Activated naive CD4-positive, alpha-beta T cell treated with anti-CD3 and anti-CD28 coated beads, Interleukin-2, amount 10 ng/mL, durations not matched to agents 7 days and 5 days (primary cell): ENCODE measurements at regions of chr11 and their contacts with region 1.

Region 1: DNA sequence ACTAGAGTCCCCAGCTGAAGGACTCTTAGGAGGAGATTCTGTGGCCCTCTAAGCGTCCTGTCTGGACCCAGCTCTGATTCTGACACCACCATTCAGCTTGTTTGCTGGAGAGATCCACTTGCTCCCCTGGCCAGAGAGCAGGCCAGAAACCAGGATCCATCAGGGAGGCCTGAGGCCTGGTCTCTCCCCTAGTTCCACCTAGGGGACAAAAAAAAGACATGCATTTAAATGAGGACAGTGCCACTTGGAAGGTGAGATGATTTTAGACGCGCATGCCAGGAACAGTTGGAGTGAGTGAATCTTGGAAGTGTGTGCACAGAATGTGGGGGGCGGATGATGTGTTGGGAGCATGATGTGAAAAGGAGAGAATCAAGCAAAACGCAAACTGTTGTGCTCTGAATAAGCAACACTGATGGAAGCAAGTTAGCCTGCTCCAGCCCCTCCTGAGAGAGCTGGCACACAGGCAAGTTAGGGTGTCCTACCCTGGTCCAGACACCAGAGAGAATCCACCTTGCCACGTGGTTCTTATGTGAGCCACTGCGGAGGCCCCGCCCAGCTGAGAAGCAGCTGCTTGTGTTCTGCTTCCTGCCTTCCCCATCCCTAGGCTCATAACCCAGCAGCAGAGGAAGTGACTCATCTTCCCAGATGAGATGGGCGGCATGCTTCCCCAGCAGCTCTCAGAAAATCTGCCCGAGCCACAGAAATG is 8.0 kb upstream of the SLCO2B1 start:
- DNase-seq: peak; percentile 88
- H3K4me3 Mint-ChIP-seq: peak overlapping the region; percentile 27
- H3K27ac Mint-ChIP-seq: peak overlapping the region; percentile 92
- H3K4me1 Mint-ChIP-seq: peaks cover 46% of the 10 kb centered on the region
- H3K27me3 Mint-ChIP-seq: peaks cover 18% of the 10 kb centered on the region

Region 2: GRCh38 chr11:74929431-74930363 is 213.2 kb before region 1 on chr11:
- CTCF ChIA-PET with region 1: interaction called, 51 read pairs
- DNase-seq: peak; percentile 77
- H3K4me3 Mint-ChIP-seq: no peak overlapping the region
- H3K27ac Mint-ChIP-seq: no peak overlapping the region
- H3K4me1 Mint-ChIP-seq: peaks cover 19% of the 10 kb centered on the region
- H3K27me3 Mint-ChIP-seq: no peaks in the 10 kb centered on the region

Region 3: DNA sequence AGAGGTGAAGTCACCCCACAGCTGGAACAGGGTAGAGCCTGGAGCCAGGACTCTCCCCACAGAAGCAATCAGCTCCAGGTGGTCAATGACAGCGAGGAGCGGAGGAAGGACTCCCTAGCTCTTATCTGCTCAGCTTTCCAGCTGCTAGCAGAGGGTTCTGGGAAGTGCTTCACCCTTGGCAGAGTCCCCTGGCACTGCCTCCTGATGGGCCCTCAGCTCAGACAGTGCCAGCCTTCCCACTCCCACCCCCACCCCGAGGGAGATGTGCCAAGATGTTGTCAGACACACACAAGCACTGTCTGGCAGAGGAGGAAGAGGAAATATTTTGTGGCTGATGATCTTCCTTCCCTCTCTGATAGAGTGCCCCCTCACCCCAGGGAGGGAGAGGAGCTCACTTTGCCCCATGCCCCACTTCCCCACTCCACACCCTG is 52.3 kb after region 1 on chr11:
- CTCF ChIA-PET with region 1: interaction called, 524 read pairs
- DNase-seq: no peak
- H3K4me3 Mint-ChIP-seq: no peak overlapping the region
- H3K27ac Mint-ChIP-seq: no peak overlapping the region
- H3K4me1 Mint-ChIP-seq: no peaks in the 10 kb centered on the region
- H3K27me3 Mint-ChIP-seq: peaks cover 69% of the 10 kb centered on the region

Region 4: DNA sequence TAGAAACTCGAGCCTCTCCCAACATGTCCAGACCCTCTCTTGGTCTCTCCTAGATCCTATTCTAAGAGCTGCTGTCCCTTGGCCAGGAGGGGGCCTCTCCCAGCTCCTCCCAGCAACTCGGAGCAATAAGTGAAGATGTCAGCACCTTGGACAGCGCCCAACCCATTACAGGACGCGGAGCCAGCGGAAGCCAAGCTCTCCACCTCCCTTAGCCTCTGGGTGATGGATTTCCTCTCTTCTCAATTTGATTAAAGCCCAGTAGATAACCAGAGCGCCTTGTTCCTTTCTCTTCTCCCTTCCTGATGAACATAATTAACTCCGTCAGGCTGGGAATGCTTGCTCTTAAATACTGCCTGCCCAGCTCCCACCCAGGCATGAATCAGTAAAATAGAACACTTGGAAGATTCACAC is 71.5 kb after region 1 on chr11:
- CTCF ChIA-PET with region 1: interaction called, 524 read pairs
- DNase-seq: peak; percentile 93
- H3K4me3 Mint-ChIP-seq: no peak overlapping the region
- H3K27ac Mint-ChIP-seq: no peak overlapping the region
- H3K4me1 Mint-ChIP-seq: no peaks in the 10 kb centered on the region
- H3K27me3 Mint-ChIP-seq: peaks cover 24% of the 10 kb centered on the region

Region 5: DNA sequence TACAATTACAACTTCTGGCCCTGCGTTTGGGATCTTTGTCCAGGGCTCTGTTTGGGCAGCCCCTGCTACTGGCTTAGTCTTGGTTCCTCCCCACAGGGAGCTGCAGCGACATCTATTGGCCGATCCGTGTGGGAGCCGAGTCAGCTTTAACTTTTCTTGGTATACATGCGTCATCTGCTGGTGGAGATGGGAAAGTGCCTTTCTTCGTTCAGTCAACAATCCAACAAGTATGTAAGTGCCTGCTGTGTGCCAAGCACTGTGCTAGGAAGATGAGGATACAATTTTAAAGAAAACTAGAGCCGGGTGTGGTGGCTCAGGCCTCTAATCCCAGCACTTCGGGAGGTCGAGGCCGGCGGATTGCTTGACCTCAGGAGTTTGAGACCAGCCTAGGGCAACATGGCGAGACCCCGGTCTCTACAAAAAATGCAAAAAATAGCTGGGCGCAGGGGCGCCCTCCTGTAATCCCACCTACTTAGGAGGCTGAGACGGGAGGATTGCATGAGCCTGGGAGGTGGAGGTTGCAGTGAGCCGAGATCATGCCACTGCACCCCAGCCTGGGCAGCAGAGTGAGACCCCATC is 105.9 kb after region 1 on chr11:
- CTCF ChIA-PET with region 1: interaction called, 273 read pairs
- DNase-seq: peak; percentile 91
- H3K4me3 Mint-ChIP-seq: no peak overlapping the region
- H3K27ac Mint-ChIP-seq: no peak overlapping the region
- H3K4me1 Mint-ChIP-seq: no peaks in the 10 kb centered on the region
- H3K27me3 Mint-ChIP-seq: peaks cover 59% of the 10 kb centered on the region